Endothelial cell of umbilical vein (primary cell): ENCODE measurements at regions of chr3 and their contacts with region 1.

Region 1: GRCh38 chr3:22759636-22760310 is 443.4 kb upstream of the UBE2E2 start:
- DNase-seq: no peak
- H3K4me3 ChIP-seq: no peak overlapping the region
- H3K27ac ChIP-seq: no peak overlapping the region
- H3K4me1 ChIP-seq: no peaks in the 10 kb centered on the region
- H3K27me3 ChIP-seq: no peaks in the 10 kb centered on the region
- CTCF ChIP-seq: no peak
- POLR2A ChIP-seq: no peak

Region 2: GRCh38 chr3:22777835-22778234 is 18.1 kb after region 1 on chr3:
- CTCF ChIA-PET with region 1: interaction called, 3 read pairs
- POLR2A ChIA-PET with region 1: no interaction called
- dilution Hi-C with region 1: no loop called
- intact Hi-C with region 1: loop called (anchors 1 kb)
- DNase-seq: no peak
- H3K4me3 ChIP-seq: no peak overlapping the region
- H3K27ac ChIP-seq: no peak overlapping the region
- H3K4me1 ChIP-seq: no peaks in the 10 kb centered on the region
- H3K27me3 ChIP-seq: no peaks in the 10 kb centered on the region
- CTCF ChIP-seq: no peak
- POLR2A ChIP-seq: no peak

Region 3: GRCh38 chr3:23232016-23232415 is 472.2 kb after region 1 on chr3:
- CTCF ChIA-PET with region 1: no interaction called
- POLR2A ChIA-PET with region 1: no interaction called
- dilution Hi-C with region 1: no loop called
- intact Hi-C with region 1: no loop called
- DNase-seq: no peak
- H3K4me3 ChIP-seq: no peak overlapping the region
- H3K27ac ChIP-seq: no peak overlapping the region
- H3K4me1 ChIP-seq: peaks cover 5% of the 10 kb centered on the region
- H3K27me3 ChIP-seq: no peaks in the 10 kb centered on the region
- CTCF ChIP-seq: no peak
- POLR2A ChIP-seq: no peak